Endothelial cell of umbilical vein (primary cell): ENCODE measurements at regions of chr2 and their contacts with region 1.

Region 1: DNA sequence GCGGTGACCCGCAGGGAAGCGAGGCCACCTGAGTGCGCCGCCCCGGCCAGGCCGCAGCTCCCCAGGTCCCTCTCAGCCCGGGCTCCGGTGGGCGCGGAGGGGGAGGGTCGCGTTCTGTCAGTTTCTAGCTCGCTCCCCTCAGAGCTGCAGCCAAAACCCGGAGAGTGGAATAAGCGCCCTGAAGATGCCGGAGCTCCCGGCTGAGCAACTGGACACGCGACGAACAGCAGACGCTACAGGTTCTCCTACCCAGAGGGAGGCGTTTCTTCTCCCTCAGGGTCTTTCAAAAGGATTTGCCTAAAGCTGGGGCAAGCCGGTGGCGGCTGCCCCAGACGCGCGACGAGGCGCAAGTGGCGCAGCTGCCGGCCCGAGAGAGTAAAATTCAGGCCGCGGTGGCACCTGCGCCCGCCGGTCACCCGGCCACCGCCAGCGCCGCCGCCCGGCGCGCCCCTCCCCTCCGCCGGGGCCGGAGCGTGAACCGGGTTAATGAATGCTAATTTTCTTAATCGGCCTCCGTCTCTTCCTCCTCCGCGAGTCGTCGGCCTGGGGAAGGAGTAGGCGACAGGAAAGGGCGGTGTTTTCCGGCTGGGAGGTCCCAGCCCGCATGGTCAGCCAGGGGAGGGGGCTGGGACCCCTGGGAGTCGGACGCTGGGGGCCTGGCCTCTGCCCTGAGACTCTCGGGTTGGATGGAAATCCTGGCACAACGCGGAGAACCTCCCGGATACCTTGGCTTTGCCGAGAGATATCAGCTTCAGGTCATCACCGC is 845 bp upstream of the CDC42EP3 start:
- DNase-seq: peak; percentile 85
- H3K4me3 ChIP-seq: peak overlapping the region; percentile 59 to 84 (median 67)
- H3K27ac ChIP-seq: peak overlapping the region; percentile 75
- H3K4me1 ChIP-seq: peaks cover 43% of the 10 kb centered on the region
- H3K27me3 ChIP-seq: no peaks in the 10 kb centered on the region
- CTCF ChIP-seq: no peak
- POLR2A ChIP-seq: no peak

Region 2: DNA sequence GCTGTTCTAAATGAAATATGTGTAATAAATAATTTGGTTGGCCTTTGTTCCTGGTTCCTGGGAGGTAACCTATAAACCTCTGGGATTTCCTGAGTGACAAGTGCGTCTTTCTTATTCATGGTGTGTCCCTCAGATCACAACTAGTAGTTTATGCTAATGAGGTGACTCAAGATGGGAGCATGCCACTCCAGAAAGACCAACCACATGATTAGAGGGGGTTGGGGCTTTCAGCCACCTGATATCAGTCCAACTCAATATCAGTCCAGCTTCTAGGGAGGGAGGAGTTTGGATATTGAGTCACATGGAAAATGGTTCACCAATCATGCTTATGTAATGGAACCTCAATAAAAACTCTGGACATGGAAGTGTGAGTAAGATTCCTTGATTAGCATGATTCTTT is 231.2 kb before region 1 on chr2:
- CTCF ChIA-PET with region 1: no interaction called
- POLR2A ChIA-PET with region 1: no interaction called
- dilution Hi-C with region 1: no loop called
- intact Hi-C with region 1: no loop called
- DNase-seq: no peak
- H3K4me3 ChIP-seq: no peak overlapping the region
- H3K27ac ChIP-seq: no peak overlapping the region
- H3K4me1 ChIP-seq: no peaks in the 10 kb centered on the region
- H3K27me3 ChIP-seq: no peaks in the 10 kb centered on the region
- CTCF ChIP-seq: no peak
- POLR2A ChIP-seq: no peak

Region 3: DNA sequence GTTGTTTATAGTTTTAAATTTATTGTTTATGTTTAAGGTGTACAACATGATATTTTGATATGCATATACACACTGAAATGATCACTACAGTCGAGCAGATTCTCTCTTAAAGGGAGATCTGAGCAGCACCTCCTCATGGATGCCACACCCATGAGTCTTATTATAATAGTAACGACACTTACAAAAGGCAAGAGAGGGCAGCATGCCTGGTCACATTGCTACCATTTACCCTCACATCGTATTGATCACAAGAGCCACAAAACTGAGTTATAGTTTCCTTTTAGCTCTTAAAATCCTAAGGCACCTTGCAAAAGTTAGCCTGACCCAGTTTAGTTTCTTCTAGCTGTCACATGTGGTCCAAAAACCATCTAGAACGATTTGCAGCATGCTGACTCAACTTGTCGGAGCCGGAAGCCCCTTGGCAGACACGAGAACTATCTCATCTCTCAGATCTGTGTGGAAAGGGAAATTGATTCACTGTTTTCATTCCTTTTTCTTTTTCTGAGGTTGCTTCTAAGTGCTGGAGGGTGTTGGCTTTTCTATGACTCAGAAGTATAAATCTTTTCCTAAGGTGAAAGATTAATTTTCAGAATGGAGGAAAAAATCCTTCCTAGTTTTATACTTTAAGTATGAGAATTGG is 86.2 kb before region 1 on chr2:
- CTCF ChIA-PET with region 1: interaction called, 6 read pairs
- POLR2A ChIA-PET with region 1: no interaction called
- dilution Hi-C with region 1: no loop called
- intact Hi-C with region 1: loop called (anchors 1 kb)
- DNase-seq: peak; percentile 96
- H3K4me3 ChIP-seq: no peak overlapping the region
- H3K27ac ChIP-seq: peak overlapping the region; percentile 75
- H3K4me1 ChIP-seq: peaks cover 88% of the 10 kb centered on the region
- H3K27me3 ChIP-seq: no peaks in the 10 kb centered on the region
- CTCF ChIP-seq: no peak
- POLR2A ChIP-seq: no peak

Region 4: DNA sequence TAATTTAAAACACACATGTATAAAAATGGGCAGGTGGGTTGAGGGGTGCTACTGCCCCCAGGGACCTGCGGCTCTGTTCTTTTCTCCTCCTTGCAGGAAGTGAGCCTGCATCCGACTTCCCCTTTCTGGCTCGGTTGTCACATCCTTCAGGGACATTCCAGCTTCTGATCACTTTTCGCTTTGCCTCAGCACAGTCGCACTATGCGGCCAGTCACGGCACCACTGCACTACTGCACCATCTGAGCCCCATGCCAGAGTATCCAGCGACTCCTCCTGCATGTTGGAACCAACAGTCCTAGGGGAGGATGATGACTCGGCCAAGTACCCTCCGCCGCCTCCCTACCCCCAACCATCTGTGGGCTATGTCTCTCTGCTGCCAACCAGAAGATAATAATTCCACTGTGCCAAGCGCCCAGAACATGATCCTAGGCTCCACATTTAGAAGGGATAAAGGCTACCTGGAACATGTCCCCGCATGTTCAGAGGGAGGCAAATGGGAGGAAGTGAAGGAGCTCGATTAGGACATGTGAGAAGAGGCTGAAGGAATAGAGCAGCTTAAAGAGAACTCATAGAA is 18.4 kb before region 1 on chr2:
- CTCF ChIA-PET with region 1: interaction called, 11 read pairs
- POLR2A ChIA-PET with region 1: no interaction called
- dilution Hi-C with region 1: no loop called
- intact Hi-C with region 1: loop called (anchors 1 kb)
- DNase-seq: no peak
- H3K4me3 ChIP-seq: no peak overlapping the region
- H3K27ac ChIP-seq: peak overlapping the region; percentile 97
- H3K4me1 ChIP-seq: peaks cover 79% of the 10 kb centered on the region
- H3K27me3 ChIP-seq: no peaks in the 10 kb centered on the region
- CTCF ChIP-seq: no peak
- POLR2A ChIP-seq: peak; percentile 6

Region 5: GRCh38 chr2:37776487-37776886 is 104.2 kb after region 1 on chr2:
- CTCF ChIA-PET with region 1: no interaction called
- POLR2A ChIA-PET with region 1: no interaction called
- dilution Hi-C with region 1: no loop called
- intact Hi-C with region 1: loop called (anchors 5 kb)
- DNase-seq: peak; percentile 58
- H3K4me3 ChIP-seq: no peak overlapping the region
- H3K27ac ChIP-seq: peak overlapping the region; percentile 65
- H3K4me1 ChIP-seq: peaks cover 41% of the 10 kb centered on the region
- H3K27me3 ChIP-seq: no peaks in the 10 kb centered on the region
- CTCF ChIP-seq: no peak
- POLR2A ChIP-seq: no peak